ENCODE measurements at regions of chr6 and their contacts with region 1.

Region 1: GRCh38 chr6:36546920-36547645 is at the start of gene STK38:
- DNase-seq: peak; percentile 84
- H3K4me3 Mint-ChIP-seq: peak within 1 kb of the TSS; percentile 95
- H3K27ac Mint-ChIP-seq: peak within 1 kb of the TSS; percentile 92
- H3K4me1 Mint-ChIP-seq: peaks cover 50% of the 10 kb centered on the region
- H3K27me3 Mint-ChIP-seq: peaks cover 2% of the 10 kb centered on the region
- total RNA-seq, gene STK38: 23.5 and 23.6 TPM in 2 replicates

Region 2: DNA sequence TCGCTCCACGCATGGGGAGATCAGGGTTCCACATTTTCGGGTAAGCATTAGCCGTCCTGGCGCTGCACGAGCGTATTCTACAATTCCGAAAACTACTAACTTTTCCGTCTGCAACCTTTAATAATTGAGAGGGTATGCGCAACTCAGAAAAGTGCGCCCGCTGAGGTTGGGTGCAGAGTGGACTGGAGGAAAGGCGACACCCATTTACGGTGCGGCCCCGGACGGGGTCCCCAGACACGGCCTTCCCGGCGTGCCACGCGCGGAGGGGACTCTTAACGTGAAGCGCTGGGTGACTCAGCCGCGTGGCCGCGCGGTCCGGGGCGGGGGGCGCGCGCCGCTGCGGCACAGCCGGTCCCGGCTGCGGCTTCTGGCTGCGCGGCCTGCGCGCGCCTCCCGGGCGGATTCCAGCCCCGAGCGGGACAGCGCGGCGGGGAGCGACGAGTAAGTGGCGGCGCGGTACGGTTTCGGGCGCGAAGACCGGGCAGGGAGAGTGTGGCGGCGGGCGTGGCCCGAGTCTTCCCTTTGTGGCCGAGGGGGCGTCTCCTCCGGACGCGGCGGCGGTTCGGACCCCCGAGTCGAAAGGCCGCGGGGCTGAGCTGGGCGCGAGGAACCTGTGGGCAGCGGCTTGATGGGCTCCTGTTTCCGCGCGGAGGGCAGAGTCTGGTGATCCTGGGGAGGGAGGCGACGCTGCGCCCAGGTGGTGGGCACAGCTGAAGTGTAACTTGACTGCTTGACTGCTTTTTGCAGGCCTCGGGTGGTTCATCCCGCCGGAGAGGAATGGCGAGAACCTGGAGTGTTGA is 104.2 kb before region 1 on chr6 and contains the starts of genes KCTD20 and PXT1:
- intact Hi-C with region 1: loop called (anchors 1 kb)
- DNase-seq: peak; percentile 86
- H3K4me3 Mint-ChIP-seq: peak within 1 kb of the TSS; percentile 96
- H3K27ac Mint-ChIP-seq: peak within 1 kb of the TSS; percentile 95
- H3K4me1 Mint-ChIP-seq: peaks cover 48% of the 10 kb centered on the region
- H3K27me3 Mint-ChIP-seq: no peaks in the 10 kb centered on the region
- total RNA-seq, gene KCTD20: 62.4 and 62.8 TPM in 2 replicates
- total RNA-seq, gene PXT1: 0.16 and 0.29 TPM in 2 replicates

Region 3: GRCh38 chr6:36504982-36505381 is 42.1 kb before region 1 on chr6:
- intact Hi-C with region 1: no loop called
- DNase-seq: no peak
- H3K4me3 Mint-ChIP-seq: no peak overlapping the region
- H3K27ac Mint-ChIP-seq: no peak overlapping the region
- H3K4me1 Mint-ChIP-seq: peaks cover 10% of the 10 kb centered on the region
- H3K27me3 Mint-ChIP-seq: no peaks in the 10 kb centered on the region

Region 4: DNA sequence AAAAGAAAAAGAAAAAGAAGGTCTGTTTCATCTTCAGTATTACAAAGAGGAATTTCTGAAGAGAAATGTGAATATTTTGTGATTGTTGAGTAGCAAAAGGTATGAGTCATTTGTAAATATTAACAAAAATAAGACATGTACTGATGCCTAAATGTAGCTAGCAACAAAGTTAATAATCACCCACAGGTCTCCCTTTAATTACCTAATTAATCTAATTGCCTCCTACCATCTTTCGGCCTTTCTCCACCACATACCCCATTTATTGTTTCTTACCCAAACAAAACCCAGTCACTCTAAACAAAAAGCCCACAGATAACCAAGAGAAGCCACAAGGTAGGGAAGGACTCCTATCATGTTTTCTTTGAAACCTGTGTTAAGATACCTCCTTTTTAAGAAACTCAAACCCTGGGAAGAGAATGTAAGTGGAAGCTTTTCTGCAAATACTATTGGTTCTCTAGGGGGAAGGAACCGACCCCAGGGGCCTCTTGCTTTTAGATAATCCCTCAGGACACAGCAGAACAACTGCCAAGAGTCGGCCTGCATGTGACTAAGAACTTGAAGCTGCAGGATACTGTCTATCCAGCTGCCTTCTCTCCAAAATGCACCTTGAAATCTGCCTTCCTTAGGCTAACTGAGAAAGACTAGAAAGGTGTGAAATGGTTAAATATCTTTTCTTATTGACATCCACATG is 16.3 kb after region 1 on chr6:
- intact Hi-C with region 1: no loop called
- DNase-seq: no peak
- H3K4me3 Mint-ChIP-seq: no peak overlapping the region
- H3K27ac Mint-ChIP-seq: no peak overlapping the region
- H3K4me1 Mint-ChIP-seq: no peaks in the 10 kb centered on the region
- H3K27me3 Mint-ChIP-seq: peaks cover 12% of the 10 kb centered on the region

Region 5: DNA sequence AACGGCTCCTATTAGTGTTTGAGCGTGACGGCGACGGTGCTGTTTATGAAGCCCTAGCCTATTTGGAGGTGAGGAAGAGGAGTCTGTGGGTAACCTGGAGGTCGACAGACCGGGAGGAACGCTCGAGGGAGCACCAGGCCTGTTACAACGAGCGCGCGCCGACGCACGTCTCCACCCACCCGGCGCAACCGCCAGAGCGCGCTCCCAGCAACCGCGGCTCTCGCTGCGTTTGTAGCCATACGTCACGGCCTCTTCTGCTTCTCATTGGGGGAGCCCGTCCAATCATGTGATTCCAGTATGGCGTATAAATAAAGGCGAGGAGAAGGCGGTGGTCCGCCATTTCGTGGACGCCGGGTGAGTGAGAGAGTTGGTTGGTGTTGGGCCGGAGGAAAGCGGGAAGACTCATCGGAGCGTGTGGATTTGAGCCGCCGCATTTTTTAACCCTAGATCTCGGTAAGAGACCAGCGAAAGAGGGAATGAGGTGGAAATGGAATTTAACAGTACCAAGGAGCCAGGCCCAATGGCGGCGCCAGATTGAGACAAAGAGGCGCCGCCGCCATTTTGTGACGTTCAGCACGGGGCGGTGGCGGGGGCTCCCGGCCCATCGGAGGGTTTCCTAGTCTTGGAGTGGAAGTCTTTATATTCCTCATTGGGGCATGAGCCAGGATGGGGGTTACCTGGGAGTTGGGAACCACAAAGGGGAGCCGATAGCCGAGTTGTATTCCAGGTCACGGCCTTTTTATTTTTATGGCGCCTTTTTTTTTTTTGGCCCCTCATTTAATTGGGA is 47.1 kb after region 1 on chr6 and contains the start of gene SRSF3:
- intact Hi-C with region 1: loop called (anchors 1 kb)
- DNase-seq: peak; percentile 96
- H3K4me3 Mint-ChIP-seq: peak within 1 kb of the TSS; percentile 97
- H3K27ac Mint-ChIP-seq: peak within 1 kb of the TSS; percentile 100
- H3K4me1 Mint-ChIP-seq: peaks cover 44% of the 10 kb centered on the region
- H3K27me3 Mint-ChIP-seq: no peaks in the 10 kb centered on the region
- total RNA-seq, gene SRSF3: 525 and 546 TPM in 2 replicates